Activated CD4-positive, alpha-beta T cell treated with anti-CD3 and anti-CD28 coated beads for 36 hours (primary cell): ENCODE measurements at regions of chr11 and their contacts with region 1.

Region 1: GRCh38 chr11:46593550-46594373 is at the start of gene AMBRA1:
- DNase-seq: peak; percentile 91
- ATAC-seq: peak; percentile 87
- H3K4me3 Mint-ChIP-seq: peak within 1 kb of the TSS; percentile 93
- H3K27ac Mint-ChIP-seq: peak within 1 kb of the TSS; percentile 91
- H3K4me1 Mint-ChIP-seq: peaks cover 40% of the 10 kb centered on the region
- H3K27me3 Mint-ChIP-seq: no peaks in the 10 kb centered on the region
- total RNA-seq, gene AMBRA1: 24.8 to 26.4 TPM

Region 2: DNA sequence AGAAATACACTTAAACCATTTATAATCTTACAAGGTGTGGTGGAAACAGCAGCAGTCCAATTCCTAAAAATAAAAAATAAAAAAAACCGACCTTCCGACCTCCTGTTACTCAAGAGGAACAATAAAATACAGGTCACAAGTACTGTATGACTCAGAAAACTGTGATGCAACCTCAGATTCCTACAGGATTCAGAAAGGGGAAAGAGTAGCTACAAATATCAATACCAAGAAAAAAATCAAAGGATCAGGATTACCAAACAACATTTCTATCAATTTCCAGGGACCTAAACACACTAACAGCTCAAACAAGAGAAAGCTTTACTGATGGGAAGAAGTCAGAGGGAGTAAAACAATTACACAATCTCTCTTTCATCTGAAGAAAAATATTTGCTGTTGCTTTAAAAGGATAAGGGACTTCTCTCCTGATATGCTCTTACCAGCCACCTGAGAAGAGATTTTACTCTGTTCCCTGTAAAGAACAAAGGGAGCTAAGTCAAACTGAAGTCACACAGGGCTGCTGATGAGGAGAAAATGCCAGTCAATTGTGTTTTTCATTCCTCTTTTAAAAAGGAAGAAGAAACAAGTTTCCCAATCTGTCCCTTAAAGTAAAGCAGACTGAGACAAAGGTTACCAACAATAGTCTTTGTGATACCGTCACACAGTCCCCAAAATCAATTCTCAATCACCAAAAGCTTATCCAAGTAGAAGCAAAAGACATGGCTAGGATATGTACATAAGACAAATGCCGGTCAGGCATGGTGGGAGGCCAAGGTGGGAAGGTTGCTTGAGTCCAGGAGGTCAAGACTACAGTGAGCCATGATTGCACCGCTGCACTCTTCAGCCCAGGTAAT is 39.3 kb before region 1 on chr11:
- CTCF ChIA-PET with region 1: no interaction called
- POLR2A ChIA-PET with region 1: interaction called, 4 read pairs
- intact Hi-C with region 1: loop called in 1 of 2 experiments (anchors 5 kb)
- DNase-seq: no peak
- ATAC-seq: no peak
- H3K4me3 Mint-ChIP-seq: no peak overlapping the region
- H3K27ac Mint-ChIP-seq: peak overlapping the region; percentile 59
- H3K4me1 Mint-ChIP-seq: peaks cover 43% of the 10 kb centered on the region
- H3K27me3 Mint-ChIP-seq: no peaks in the 10 kb centered on the region

Region 3: GRCh38 chr11:46718155-46719019 is 124.6 kb after region 1 on chr11:
- CTCF ChIA-PET with region 1: no interaction called
- POLR2A ChIA-PET with region 1: no interaction called
- intact Hi-C with region 1: no loop called
- DNase-seq: no peak
- ATAC-seq: peak; percentile 30
- H3K4me3 Mint-ChIP-seq: no peak overlapping the region
- H3K27ac Mint-ChIP-seq: no peak overlapping the region
- H3K4me1 Mint-ChIP-seq: peaks cover 5% of the 10 kb centered on the region
- H3K27me3 Mint-ChIP-seq: no peaks in the 10 kb centered on the region